Psoas muscle (tissue), 8 donors: ENCODE measurements at regions of chr1 and their contacts with region 1.

Region 1: GRCh38 chr1:18949686-18950400 is 6.6 kb downstream of the IFFO2 start:
- DNase-seq: peak; percentile 47 to 66
- ATAC-seq: peak; percentile 41 to 74 (median 62)
- H3K4me3 ChIP-seq: peak overlapping the region; percentile 56
- H3K27ac ChIP-seq: peak overlapping the region; percentile 74
- H3K4me1 ChIP-seq: peaks cover 52% of the 10 kb centered on the region
- H3K27me3 ChIP-seq: no peaks in the 10 kb centered on the region
- CTCF ChIP-seq: no peak

Region 2: GRCh38 chr1:18913065-18913835 is 36.6 kb before region 1 on chr1:
- intact Hi-C with region 1: loop called in 1 of 2 experiments (anchors 5 kb)
- DNase-seq: peak; percentile 87 to 92
- ATAC-seq: peak; percentile 83 to 95 (median 91)
- H3K4me3 ChIP-seq: no peak overlapping the region
- H3K27ac ChIP-seq: peak overlapping the region; percentile 55
- H3K4me1 ChIP-seq: peaks cover 8% of the 10 kb centered on the region
- H3K27me3 ChIP-seq: no peaks in the 10 kb centered on the region
- CTCF ChIP-seq: peak; percentile 82

Region 3: DNA sequence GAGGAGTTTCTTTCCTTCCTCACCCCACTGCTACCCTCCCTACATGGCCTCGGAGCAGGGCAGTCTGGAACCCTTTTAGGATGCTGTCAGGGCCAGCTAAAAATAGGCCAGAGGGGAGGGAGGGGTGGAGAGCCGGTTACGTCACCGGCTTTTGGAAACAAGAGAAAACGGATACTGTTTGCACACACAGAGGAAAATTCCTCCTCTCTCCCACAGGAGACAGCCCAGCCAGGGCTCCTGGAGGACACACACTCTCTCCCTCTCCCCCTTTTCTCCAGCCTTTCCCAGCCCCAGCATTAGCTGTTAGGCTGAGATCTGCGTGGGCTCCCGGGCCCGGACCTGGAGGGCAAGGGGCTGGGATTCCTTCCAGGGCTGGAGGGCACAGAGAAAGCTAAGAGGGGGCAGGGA is 27.5 kb before region 1 on chr1:
- intact Hi-C with region 1: loop called (anchors 1 to 5 kb)
- DNase-seq: peak; percentile 83 to 86
- ATAC-seq: peak; percentile 78 to 86 (median 80)
- H3K4me3 ChIP-seq: peak overlapping the region; percentile 53
- H3K27ac ChIP-seq: peak overlapping the region; percentile 86
- H3K4me1 ChIP-seq: peaks cover 36% of the 10 kb centered on the region
- H3K27me3 ChIP-seq: no peaks in the 10 kb centered on the region
- CTCF ChIP-seq: no peak

Region 4: GRCh38 chr1:18938008-18938706 is 11.7 kb before region 1 on chr1:
- intact Hi-C with region 1: no loop called
- DNase-seq: no peak
- ATAC-seq: peak in 1 of 4 donors; percentile 23
- H3K4me3 ChIP-seq: no peak overlapping the region
- H3K27ac ChIP-seq: no peak overlapping the region
- H3K4me1 ChIP-seq: peaks cover 27% of the 10 kb centered on the region
- H3K27me3 ChIP-seq: no peaks in the 10 kb centered on the region
- CTCF ChIP-seq: no peak